H1 (cell line): ENCODE measurements at regions of chr1 and their contacts with region 1.

Region 1: DNA sequence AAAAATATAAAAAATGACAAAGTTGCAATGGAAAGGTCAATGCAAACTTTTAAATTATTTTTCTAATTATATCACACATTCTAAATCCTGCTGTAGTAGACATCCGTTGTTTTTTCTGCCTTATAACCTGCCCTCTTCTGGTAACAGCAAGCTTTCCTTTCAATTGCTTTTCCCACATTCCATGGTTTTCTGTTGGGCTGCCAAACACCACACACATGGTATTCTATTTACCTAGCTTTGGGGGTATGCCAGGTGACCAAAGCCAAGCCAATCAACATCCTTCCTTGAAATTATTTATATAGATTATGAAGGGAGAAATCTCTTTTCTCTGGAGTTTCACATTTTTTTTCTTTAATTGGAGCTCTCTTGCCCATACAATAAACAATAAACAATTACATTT is 3.4 kb upstream of the LAMC1 start:
- DNase-seq: no peak
- H3K4me3 ChIP-seq: no peak overlapping the region
- H3K27ac ChIP-seq: no peak overlapping the region
- H3K4me1 ChIP-seq: peaks cover 0 to 4% (median 2%) of the 10 kb centered on the region in 4 experiments; a peak in 2 of 7 replicates
- H3K27me3 ChIP-seq: no peaks in the 10 kb centered on the region
- CTCF ChIP-seq: no peak; a peak in 1 of 4 replicates
- EP300 ChIP-seq: no peak
- POLR2A ChIP-seq: no peak
- RAD21 ChIP-seq: peak in 1 of 2 experiments; percentile 19; a peak in 2 of 4 replicates

Region 2: DNA sequence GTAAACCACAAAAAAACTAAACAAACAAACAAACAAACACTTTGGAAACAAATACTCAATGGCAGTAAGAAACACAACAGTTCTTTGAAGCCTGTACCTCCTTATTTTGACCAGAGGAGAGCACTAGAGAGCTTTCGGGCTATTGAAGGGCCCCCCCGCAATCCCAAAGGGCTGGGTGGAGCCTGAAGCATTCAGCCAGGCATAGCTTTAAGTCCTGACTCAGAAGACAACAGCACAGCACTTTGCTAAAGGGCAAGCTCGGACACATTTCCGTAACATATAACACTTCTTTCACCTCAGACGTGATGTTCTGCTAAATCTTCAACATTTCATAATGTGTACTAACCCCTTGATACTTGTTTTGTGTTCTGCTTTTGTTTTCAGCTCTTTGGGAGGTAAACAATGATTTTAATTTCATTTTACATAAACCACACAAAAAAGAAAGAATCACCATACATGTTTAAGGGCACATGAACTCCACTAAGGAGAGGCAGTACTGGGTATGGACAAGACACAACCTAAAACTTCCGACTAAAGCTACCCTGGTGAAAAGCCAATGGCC is 57.2 kb before region 1 on chr1:
- CTCF ChIA-PET with region 1: interaction called, 22 read pairs
- POLR2A ChIA-PET with region 1: no interaction called
- DNase-seq: peak in 1 of 2 experiments; percentile 63
- H3K4me3 ChIP-seq: no peak overlapping the region; a peak in 1 of 8 replicates
- H3K27ac ChIP-seq: no peak overlapping the region
- H3K4me1 ChIP-seq: peaks cover 4 to 9% (median 4%) of the 10 kb centered on the region in 4 experiments; a peak in 5 of 7 replicates
- H3K27me3 ChIP-seq: no peaks in the 10 kb centered on the region
- CTCF ChIP-seq: peak; percentile 18 to 87 (median 85)
- EP300 ChIP-seq: no peak
- POLR2A ChIP-seq: no peak; a peak in 1 of 3 replicates
- RAD21 ChIP-seq: peak; percentile 96 to 98

Region 3: GRCh38 chr1:183039330-183039729 is 19.5 kb after region 1 on chr1:
- CTCF ChIA-PET with region 1: no interaction called
- POLR2A ChIA-PET with region 1: no interaction called
- DNase-seq: no peak
- H3K4me3 ChIP-seq: no peak overlapping the region
- H3K27ac ChIP-seq: no peak overlapping the region
- H3K4me1 ChIP-seq: peaks cover 0 to 11% (median 5%) of the 10 kb centered on the region in 4 experiments; a peak in 4 of 7 replicates
- H3K27me3 ChIP-seq: no peaks in the 10 kb centered on the region
- CTCF ChIP-seq: no peak
- EP300 ChIP-seq: no peak
- POLR2A ChIP-seq: no peak
- RAD21 ChIP-seq: no peak